Activated CD4-positive, alpha-beta T cell treated with anti-CD3 and anti-CD28 coated beads for 36 hours (primary cell): ENCODE measurements at regions of chr17 and their contacts with region 1.

Region 1: DNA sequence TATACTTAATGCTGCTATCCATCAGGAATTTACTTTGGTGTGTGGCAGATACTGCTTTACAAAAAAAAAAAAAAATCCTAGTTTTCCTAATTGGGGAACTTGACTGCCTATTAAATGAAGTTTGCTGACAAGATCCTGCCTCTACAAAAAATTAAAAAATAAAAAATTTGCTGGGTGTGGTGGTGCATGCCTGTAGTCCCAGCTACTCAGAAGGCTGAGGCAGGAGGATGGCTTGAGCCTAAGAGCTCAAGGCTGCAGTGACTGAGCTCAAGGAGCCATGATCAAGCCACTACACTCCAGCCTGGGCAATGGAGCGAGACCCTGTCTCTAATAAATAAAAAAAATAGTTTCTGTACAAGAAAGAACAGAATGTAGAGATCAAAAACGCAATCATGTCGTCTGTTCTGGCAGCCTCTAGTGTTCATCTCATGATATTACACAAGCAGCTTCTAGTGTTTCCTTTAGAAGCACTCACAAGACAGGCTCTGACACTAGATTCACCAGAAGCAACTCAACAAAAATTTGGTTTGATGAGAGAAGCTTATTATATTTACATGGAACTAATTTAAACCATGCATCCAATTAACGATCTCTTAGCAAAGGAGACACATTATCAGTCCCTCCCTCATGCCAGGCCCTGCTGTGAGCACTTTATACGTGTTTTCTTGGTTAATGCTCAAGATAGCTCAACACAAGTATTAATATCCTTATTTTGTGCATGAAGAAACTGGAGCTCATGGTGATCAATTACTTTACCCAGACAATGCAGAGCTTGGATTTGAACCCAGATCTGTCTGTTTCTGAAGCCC is 6.8 kb upstream of the KRTAP17-1 start:
- DNase-seq: no peak
- ATAC-seq: peak; percentile 81
- H3K4me3 Mint-ChIP-seq: no peak overlapping the region
- H3K27ac Mint-ChIP-seq: no peak overlapping the region
- H3K4me1 Mint-ChIP-seq: peaks cover 28% of the 10 kb centered on the region
- H3K27me3 Mint-ChIP-seq: no peaks in the 10 kb centered on the region

Region 2: GRCh38 chr17:40803617-40804082 is 518.6 kb before region 1 on chr17:
- CTCF ChIA-PET with region 1: no interaction called
- POLR2A ChIA-PET with region 1: no interaction called
- intact Hi-C with region 1: loop called (anchors 2 to 5 kb)
- DNase-seq: peak; percentile 89
- ATAC-seq: peak; percentile 93
- H3K4me3 Mint-ChIP-seq: no peak overlapping the region
- H3K27ac Mint-ChIP-seq: no peak overlapping the region
- H3K4me1 Mint-ChIP-seq: peaks cover 2% of the 10 kb centered on the region
- H3K27me3 Mint-ChIP-seq: peaks cover 30% of the 10 kb centered on the region

Region 3: DNA sequence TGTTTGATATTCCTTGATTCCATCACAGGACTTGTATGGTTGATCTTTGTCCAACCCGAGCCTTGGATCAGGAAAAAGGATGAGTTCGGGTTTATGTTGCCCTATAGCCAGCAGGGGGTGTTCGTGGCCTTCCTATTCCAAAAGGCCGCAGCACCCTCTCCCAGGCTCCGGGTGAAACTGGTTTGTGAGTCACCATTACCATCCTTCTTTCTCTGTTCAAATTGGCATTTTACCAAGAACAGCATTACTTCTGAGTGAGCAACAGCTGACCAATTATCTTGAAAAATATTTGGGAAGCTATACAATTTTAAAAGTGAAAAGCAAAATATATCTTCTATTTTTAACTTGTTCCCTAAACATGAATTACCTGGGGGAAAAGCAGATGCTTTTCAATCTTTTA is 412.9 kb before region 1 on chr17:
- CTCF ChIA-PET with region 1: no interaction called
- POLR2A ChIA-PET with region 1: no interaction called
- intact Hi-C with region 1: loop called (anchors 1 to 2 kb)
- DNase-seq: peak; percentile 79
- ATAC-seq: peak; percentile 94
- H3K4me3 Mint-ChIP-seq: no peak overlapping the region
- H3K27ac Mint-ChIP-seq: no peak overlapping the region
- H3K4me1 Mint-ChIP-seq: no peaks in the 10 kb centered on the region
- H3K27me3 Mint-ChIP-seq: peaks cover 31% of the 10 kb centered on the region

Region 4: DNA sequence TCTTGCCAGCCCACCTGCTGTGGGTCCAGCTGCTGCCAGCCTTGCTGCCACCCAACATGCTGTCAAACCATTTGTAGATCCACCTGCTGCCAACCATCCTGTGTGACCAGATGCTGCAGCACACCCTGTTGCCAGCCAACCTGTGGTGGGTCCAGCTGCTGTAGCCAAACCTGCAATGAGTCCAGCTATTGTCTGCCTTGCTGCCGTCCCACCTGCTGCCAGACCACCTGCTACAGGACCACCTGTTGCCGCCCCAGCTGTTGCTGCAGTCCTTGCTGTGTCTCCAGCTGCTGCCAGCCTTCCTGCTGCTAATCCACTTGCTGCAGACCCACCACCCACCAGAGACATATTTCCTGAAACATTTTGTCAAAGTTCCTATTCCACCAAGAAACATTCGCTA is 132.0 kb before region 1 on chr17:
- CTCF ChIA-PET with region 1: no interaction called
- POLR2A ChIA-PET with region 1: no interaction called
- intact Hi-C with region 1: no loop called
- DNase-seq: no peak
- ATAC-seq: no peak
- H3K4me3 Mint-ChIP-seq: no peak overlapping the region
- H3K27ac Mint-ChIP-seq: no peak overlapping the region
- H3K4me1 Mint-ChIP-seq: no peaks in the 10 kb centered on the region
- H3K27me3 Mint-ChIP-seq: peaks cover 4% of the 10 kb centered on the region

Region 5: GRCh38 chr17:41338961-41339485 is 16.7 kb after region 1 on chr17:
- CTCF ChIA-PET with region 1: interaction called, 21 read pairs
- POLR2A ChIA-PET with region 1: no interaction called
- intact Hi-C with region 1: no loop called
- DNase-seq: peak; percentile 41
- ATAC-seq: peak; percentile 66
- H3K4me3 Mint-ChIP-seq: no peak overlapping the region
- H3K27ac Mint-ChIP-seq: peak overlapping the region; percentile 55
- H3K4me1 Mint-ChIP-seq: peaks cover 76% of the 10 kb centered on the region
- H3K27me3 Mint-ChIP-seq: peaks cover 4% of the 10 kb centered on the region

Region 6: GRCh38 chr17:41496820-41497408 is 174.6 kb after region 1 on chr17:
- CTCF ChIA-PET with region 1: interaction called, 3 read pairs
- POLR2A ChIA-PET with region 1: no interaction called
- intact Hi-C with region 1: loop called in 1 of 2 experiments (anchors 1 kb)
- DNase-seq: peak; percentile 87
- ATAC-seq: peak; percentile 100
- H3K4me3 Mint-ChIP-seq: no peak overlapping the region
- H3K27ac Mint-ChIP-seq: peak overlapping the region; percentile 10
- H3K4me1 Mint-ChIP-seq: peaks cover 10% of the 10 kb centered on the region
- H3K27me3 Mint-ChIP-seq: no peaks in the 10 kb centered on the region